ENCODE measurements at regions of chr15 and their contacts with region 1.

Region 1: GRCh38 chr15:31391687-31392671 is 65.3 kb downstream of the KLF13 start:
- DNase-seq: peak; percentile 85
- H3K4me3 Mint-ChIP-seq: peak overlapping the region; percentile 89
- H3K27ac Mint-ChIP-seq: no peak overlapping the region
- H3K4me1 Mint-ChIP-seq: peaks cover 29% of the 10 kb centered on the region
- H3K27me3 Mint-ChIP-seq: peaks cover 2% of the 10 kb centered on the region

Region 2: DNA sequence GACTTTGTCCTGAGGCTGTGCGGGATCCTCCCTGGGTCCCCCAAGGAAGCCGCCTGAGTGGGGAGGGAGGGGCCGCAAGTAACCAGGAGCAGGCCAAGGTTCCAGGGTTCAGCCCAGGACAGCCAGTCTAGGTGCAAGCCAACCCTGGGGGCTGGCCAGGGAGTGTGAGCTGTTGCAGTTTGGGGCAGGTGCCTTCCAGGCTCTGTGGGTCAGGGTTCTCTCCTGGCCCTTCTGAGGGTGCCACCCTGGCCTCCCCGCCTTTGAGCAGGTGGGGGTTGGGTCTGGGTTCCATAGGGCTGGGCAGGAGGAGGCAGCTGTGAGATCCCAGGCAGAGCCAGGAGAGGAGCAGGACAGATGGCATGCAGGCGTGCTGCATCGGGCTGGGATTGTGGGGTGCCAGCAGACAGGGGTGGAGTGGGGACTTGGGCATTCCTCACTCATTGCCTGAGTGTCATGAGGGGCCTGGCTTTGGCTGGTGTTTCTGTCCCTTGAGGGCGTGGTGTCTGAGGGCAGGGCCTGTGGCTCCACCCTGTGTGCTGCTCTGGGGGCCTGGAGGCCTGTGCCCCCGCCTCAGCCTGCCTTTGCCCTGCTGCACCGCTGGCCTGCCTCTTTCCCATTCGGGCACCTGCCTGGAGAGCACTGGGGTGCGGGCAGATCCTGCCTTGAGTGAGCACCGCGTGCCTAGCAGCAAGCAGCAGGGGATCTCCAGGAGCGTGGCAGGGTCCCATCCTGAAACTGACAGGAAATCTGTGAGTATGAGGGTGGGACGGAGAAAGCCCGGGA is 47.0 kb before region 1 on chr15:
- CTCF ChIA-PET with region 1: interaction called, 3 read pairs
- intact Hi-C with region 1: loop called (anchors 1 kb)
- DNase-seq: peak; percentile 66
- H3K4me3 Mint-ChIP-seq: peak overlapping the region; percentile 92
- H3K27ac Mint-ChIP-seq: peak overlapping the region; percentile 99
- H3K4me1 Mint-ChIP-seq: peaks cover 98% of the 10 kb centered on the region
- H3K27me3 Mint-ChIP-seq: no peaks in the 10 kb centered on the region

Region 3: DNA sequence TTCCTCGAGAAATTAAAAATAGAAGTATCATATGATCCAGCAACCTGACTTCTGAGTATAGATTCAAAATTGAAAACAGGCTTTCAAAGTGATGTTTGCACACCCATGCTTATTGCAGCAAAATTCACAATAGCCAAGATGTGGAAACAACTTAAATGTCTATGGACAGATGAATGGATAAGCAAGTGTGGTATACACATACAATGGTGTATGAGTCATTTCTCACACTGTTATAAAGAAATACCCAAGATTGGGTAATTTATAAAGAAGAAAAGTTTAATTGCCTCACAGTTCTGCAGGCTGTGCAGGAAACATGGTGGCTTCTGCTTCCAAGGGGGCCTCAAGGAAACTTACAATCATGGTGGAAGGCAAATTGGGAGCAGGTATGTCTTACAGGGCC is 35.4 kb after region 1 on chr15:
- CTCF ChIA-PET with region 1: no interaction called
- intact Hi-C with region 1: no loop called
- DNase-seq: no peak
- H3K4me3 Mint-ChIP-seq: no peak overlapping the region
- H3K27ac Mint-ChIP-seq: no peak overlapping the region
- H3K4me1 Mint-ChIP-seq: peaks cover 21% of the 10 kb centered on the region
- H3K27me3 Mint-ChIP-seq: no peaks in the 10 kb centered on the region